Endothelial cell of umbilical vein (primary cell): ENCODE measurements at regions of chr15 and their contacts with region 1.

Region 1: DNA sequence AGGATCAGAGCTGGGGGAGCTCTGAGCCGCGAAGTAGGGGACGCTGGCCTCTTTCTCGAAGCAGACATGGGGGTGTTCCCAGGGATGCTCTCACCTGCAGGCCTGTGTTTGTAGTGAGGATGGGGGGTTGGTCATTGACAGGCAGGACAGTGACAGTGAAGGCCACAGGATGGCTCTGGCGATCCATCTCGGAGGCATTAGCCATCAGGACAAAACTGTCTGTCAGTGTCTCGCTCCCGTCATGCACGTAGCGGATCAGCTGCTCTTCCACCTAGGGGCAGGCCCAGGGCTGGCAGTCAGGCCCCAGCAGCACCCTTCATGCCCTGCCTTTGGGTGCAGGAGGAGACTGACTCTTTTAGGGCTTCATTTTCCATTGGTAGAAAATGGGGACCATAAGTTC is 28.0 kb downstream of the CSPG4 start:
- DNase-seq: no peak
- H3K4me3 ChIP-seq: no peak overlapping the region
- H3K27ac ChIP-seq: no peak overlapping the region
- H3K4me1 ChIP-seq: no peaks in the 10 kb centered on the region
- H3K27me3 ChIP-seq: peaks cover 14 to 21% of the 10 kb centered on the region in 2 experiments
- CTCF ChIP-seq: no peak
- POLR2A ChIP-seq: no peak

Region 2: GRCh38 chr15:75029378-75030022 is 655.1 kb before region 1 on chr15:
- CTCF ChIA-PET with region 1: interaction called, 3 read pairs
- POLR2A ChIA-PET with region 1: no interaction called
- dilution Hi-C with region 1: no loop called
- intact Hi-C with region 1: loop called (anchors 5 kb)
- DNase-seq: peak; percentile 96
- H3K4me3 ChIP-seq: peak overlapping the region in 1 of 3 experiments; percentile 30
- H3K27ac ChIP-seq: peak overlapping the region; percentile 99
- H3K4me1 ChIP-seq: peaks cover 37% of the 10 kb centered on the region
- H3K27me3 ChIP-seq: no peaks in the 10 kb centered on the region
- CTCF ChIP-seq: peak; percentile 94
- POLR2A ChIP-seq: no peak

Region 3: DNA sequence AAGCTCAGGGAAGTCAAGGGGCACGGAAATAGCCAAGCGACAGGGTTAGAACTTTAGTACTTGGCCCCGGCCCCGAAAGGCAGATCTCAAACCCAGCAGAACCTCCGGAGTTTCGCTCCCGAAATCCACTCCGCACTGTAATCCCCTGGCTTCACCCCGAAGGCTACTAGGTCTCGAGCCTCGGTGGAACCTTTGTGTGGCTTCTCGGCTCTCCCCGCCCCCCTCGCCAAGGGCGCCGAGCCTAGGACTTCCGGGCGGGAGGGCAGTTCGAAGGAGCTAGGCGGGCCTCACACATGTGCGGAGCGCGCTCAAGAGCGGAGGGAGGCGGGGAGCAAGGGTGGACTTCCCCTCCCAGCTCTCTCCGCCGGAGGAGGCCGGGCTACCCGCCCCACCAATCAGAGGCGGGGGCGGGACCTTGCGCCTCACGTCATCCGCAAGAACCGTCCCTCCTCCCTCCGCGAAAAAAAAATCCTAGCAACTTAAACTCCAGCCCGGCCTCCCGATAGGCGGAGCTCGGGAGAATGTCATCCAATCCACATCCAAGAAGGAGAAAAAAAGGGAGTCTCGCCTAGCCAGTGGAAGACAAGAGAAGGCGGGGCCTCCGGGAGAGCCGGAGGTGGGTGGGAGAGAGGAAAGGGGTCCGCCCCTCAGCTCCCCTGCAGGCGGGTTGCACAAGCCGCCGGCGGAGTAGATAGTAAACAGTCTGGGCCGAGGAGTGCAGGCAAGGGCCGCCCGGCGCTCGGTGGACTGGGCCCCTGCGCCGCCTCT is 230.8 kb before region 1 on chr15:
- CTCF ChIA-PET with region 1: interaction called, 5 read pairs
- POLR2A ChIA-PET with region 1: no interaction called
- dilution Hi-C with region 1: no loop called
- intact Hi-C with region 1: loop called (anchors 1 kb)
- DNase-seq: peak; percentile 100
- H3K4me3 ChIP-seq: peak overlapping the region; percentile 61 to 93 (median 84)
- H3K27ac ChIP-seq: peak overlapping the region; percentile 78
- H3K4me1 ChIP-seq: peaks cover 29% of the 10 kb centered on the region
- H3K27me3 ChIP-seq: no peaks in the 10 kb centered on the region
- CTCF ChIP-seq: no peak
- POLR2A ChIP-seq: peak; percentile 52

Region 4: GRCh38 chr15:75578948-75579920 is 105.4 kb before region 1 on chr15 and contains the start of gene PTPN9:
- CTCF ChIA-PET with region 1: interaction called, 7 read pairs
- POLR2A ChIA-PET with region 1: interaction called, 3 read pairs
- dilution Hi-C with region 1: no loop called
- intact Hi-C with region 1: loop called (anchors 5 kb)
- DNase-seq: peak; percentile 73
- H3K4me3 ChIP-seq: peak within 1 kb of the TSS; percentile 64 to 99 (median 97)
- H3K27ac ChIP-seq: peak within 1 kb of the TSS; percentile 68
- H3K4me1 ChIP-seq: peaks cover 11% of the 10 kb centered on the region
- H3K27me3 ChIP-seq: no peaks in the 10 kb centered on the region
- CTCF ChIP-seq: peak; percentile 16 to 54
- POLR2A ChIP-seq: peak; percentile 34
- total RNA-seq, gene PTPN9: 31.4 and 32.0 TPM in 2 replicates

Region 5: DNA sequence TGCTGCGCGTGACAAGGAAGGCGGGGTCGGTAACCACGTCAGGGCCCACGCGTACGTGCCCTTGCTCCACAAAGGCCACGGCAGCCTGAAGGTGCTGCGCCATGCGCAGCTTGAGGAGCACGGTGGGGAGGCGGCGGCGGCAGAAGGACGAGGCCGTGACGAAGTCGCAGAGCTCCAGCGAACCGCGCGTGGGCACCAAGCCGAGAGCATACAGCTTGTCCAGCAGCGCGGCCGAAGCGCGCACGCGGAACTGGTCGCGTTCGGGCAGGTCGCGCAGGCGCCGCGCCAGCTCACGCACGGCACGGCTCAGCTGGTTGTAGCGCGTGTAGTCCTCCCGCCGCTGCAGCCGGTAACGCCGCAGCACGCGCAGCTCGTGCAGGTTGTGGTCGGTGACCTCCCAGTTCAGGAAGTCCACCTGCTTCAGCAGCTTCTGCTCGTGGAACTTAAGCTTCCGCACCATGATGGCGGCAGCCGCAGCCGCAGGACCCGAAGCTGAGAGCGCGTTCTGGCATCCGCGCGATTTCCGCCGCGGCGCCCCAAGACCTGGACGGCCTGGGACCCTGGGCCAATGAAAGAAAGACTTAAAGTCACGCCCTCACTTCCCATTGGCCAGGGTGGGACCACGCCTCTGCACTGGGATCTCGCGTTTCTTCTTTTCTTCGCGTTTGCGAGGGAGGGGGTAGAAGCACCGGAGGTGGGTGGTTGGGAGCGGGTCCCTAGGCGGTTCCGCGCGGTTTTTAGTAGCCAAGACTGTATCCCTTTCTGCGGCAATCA is 44.7 kb before region 1 on chr15 and contains the start of gene IMP3:
- CTCF ChIA-PET with region 1: interaction called, 65 read pairs
- POLR2A ChIA-PET with region 1: no interaction called
- dilution Hi-C with region 1: no loop called
- intact Hi-C with region 1: loop called (anchors 1 kb)
- DNase-seq: peak; percentile 97
- H3K4me3 ChIP-seq: peak within 1 kb of the TSS; percentile 26 to 68 (median 60)
- H3K27ac ChIP-seq: peak within 1 kb of the TSS; percentile 31
- H3K4me1 ChIP-seq: peaks cover 23% of the 10 kb centered on the region
- H3K27me3 ChIP-seq: no peaks in the 10 kb centered on the region
- CTCF ChIP-seq: no peak
- POLR2A ChIP-seq: peak; percentile 97
- total RNA-seq, gene IMP3: 35.5 and 41.3 TPM in 2 replicates

Region 6: GRCh38 chr15:75732809-75733451 is 48.3 kb after region 1 on chr15:
- CTCF ChIA-PET with region 1: interaction called, 13 read pairs
- POLR2A ChIA-PET with region 1: no interaction called
- dilution Hi-C with region 1: no loop called
- intact Hi-C with region 1: no loop called
- DNase-seq: peak; percentile 62
- H3K4me3 ChIP-seq: no peak overlapping the region
- H3K27ac ChIP-seq: no peak overlapping the region
- H3K4me1 ChIP-seq: peaks cover under 1% of the 10 kb centered on the region
- H3K27me3 ChIP-seq: peaks cover 0 to 7% of the 10 kb centered on the region in 2 experiments
- CTCF ChIP-seq: peak; percentile 67 to 85
- POLR2A ChIP-seq: no peak